Endothelial cell of umbilical vein (primary cell): ENCODE measurements at regions of chr16 and their contacts with region 1.

Region 1: GRCh38 chr16:56600398-56600999 is 7.9 kb upstream of the MT2A start:
- DNase-seq: peak; percentile 54
- H3K4me3 ChIP-seq: no peak overlapping the region
- H3K27ac ChIP-seq: no peak overlapping the region
- H3K4me1 ChIP-seq: peaks cover 6% of the 10 kb centered on the region
- H3K27me3 ChIP-seq: peaks cover 2 to 3% of the 10 kb centered on the region in 2 experiments
- CTCF ChIP-seq: peak; percentile 65 to 74
- POLR2A ChIP-seq: no peak

Region 2: DNA sequence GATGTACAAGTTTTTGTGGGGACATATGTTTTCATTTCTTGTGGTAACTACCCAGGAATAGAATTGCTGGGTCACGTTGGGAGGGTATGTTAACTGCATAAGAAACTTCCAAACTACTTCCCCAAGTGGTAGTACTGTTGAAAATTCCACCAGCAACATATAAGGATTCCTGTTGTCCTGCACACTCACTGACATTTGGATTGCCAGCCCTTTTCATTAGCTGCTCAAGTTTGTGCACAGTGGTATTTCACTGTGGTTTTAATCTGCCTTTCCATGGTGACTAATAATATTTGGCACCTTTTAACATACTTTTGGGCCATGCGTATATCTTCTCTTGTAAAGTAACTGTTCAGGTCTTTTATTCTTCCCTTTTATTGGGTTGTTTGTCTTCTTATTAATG is 305.9 kb before region 1 on chr16:
- CTCF ChIA-PET with region 1: no interaction called
- POLR2A ChIA-PET with region 1: no interaction called
- dilution Hi-C with region 1: no loop called
- intact Hi-C with region 1: no loop called
- DNase-seq: no peak
- H3K4me3 ChIP-seq: no peak overlapping the region
- H3K27ac ChIP-seq: no peak overlapping the region
- H3K4me1 ChIP-seq: no peaks in the 10 kb centered on the region
- H3K27me3 ChIP-seq: no peaks in the 10 kb centered on the region
- CTCF ChIP-seq: no peak
- POLR2A ChIP-seq: no peak

Region 3: GRCh38 chr16:56506941-56507340 is 93.6 kb before region 1 on chr16:
- CTCF ChIA-PET with region 1: interaction called, 13 read pairs
- POLR2A ChIA-PET with region 1: no interaction called
- dilution Hi-C with region 1: no loop called
- intact Hi-C with region 1: no loop called
- DNase-seq: peak; percentile 92
- H3K4me3 ChIP-seq: no peak overlapping the region
- H3K27ac ChIP-seq: peak overlapping the region; percentile 83
- H3K4me1 ChIP-seq: peaks cover 12% of the 10 kb centered on the region
- H3K27me3 ChIP-seq: no peaks in the 10 kb centered on the region
- CTCF ChIP-seq: no peak
- POLR2A ChIP-seq: no peak

Region 4: DNA sequence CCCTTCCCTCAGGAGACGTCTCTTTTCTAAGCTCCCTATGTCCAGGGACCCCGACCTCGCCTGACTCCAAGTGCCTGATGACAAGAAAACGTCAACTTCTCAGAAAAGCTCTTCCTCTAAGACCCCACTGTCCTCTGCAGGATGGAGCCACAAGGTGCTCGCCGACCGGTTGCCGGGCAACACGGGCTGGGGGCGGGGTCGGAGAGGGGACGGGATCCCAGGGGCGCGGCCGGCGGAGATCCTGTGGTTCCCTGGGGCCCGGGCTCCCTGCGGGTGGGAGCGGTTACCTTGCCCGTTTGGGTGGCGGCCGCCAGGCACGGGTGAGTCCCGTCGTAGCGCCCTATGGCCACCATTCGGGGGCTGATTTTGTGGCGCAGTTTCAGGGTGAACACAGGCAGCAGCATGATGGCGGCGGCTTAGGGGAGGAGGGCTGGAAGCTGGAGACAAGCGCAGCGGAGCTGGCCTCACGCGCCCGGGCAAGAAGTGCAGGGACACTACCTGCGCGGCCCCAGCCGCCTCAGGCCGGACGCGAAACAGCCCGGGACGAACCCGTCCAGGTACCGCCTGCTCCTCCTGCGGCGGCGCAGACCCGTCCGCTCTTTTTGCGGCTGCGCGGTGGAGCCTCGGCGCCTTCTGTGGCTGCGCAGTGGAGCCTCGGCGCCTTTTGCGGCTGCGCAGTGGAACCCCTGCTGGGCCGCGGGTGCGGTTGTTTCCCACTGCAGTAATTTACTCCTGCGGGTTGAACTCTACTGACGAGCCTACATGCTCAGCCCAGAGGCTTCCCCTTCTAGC is 80.8 kb before region 1 on chr16 and contains the start of gene BBS2:
- CTCF ChIA-PET with region 1: interaction called, 113 read pairs
- POLR2A ChIA-PET with region 1: no interaction called
- dilution Hi-C with region 1: no loop called
- intact Hi-C with region 1: loop called (anchors 1 kb)
- DNase-seq: peak; percentile 89
- H3K4me3 ChIP-seq: peak within 1 kb of the TSS; percentile 61 to 89 (median 76)
- H3K27ac ChIP-seq: peak within 1 kb of the TSS; percentile 13
- H3K4me1 ChIP-seq: peaks cover 13% of the 10 kb centered on the region
- H3K27me3 ChIP-seq: no peaks in the 10 kb centered on the region
- CTCF ChIP-seq: no peak
- POLR2A ChIP-seq: peak; percentile 89
- total RNA-seq, gene BBS2: 33.3 and 44.8 TPM in 2 replicates

Region 5: GRCh38 chr16:56576585-56577293 is 23.8 kb before region 1 on chr16:
- CTCF ChIA-PET with region 1: interaction called, 48 read pairs
- POLR2A ChIA-PET with region 1: no interaction called
- dilution Hi-C with region 1: no loop called
- intact Hi-C with region 1: loop called (anchors 1 kb)
- DNase-seq: peak; percentile 64
- H3K4me3 ChIP-seq: no peak overlapping the region
- H3K27ac ChIP-seq: no peak overlapping the region
- H3K4me1 ChIP-seq: no peaks in the 10 kb centered on the region
- H3K27me3 ChIP-seq: peaks cover 0 to 9% of the 10 kb centered on the region in 2 experiments
- CTCF ChIP-seq: peak; percentile 86 to 91
- POLR2A ChIP-seq: no peak

Region 6: GRCh38 chr16:56589141-56590039 is 11.1 kb before region 1 on chr16 and contains the start of gene MT3:
- CTCF ChIA-PET with region 1: interaction called, 26 read pairs
- POLR2A ChIA-PET with region 1: no interaction called
- dilution Hi-C with region 1: no loop called
- intact Hi-C with region 1: no loop called
- DNase-seq: no peak
- H3K4me3 ChIP-seq: peak within 1 kb of the TSS in 2 of 3 experiments; percentile 20 to 32
- H3K27ac ChIP-seq: no peak within 1 kb of the TSS
- H3K4me1 ChIP-seq: no peaks in the 10 kb centered on the region
- H3K27me3 ChIP-seq: peaks cover 20 to 21% of the 10 kb centered on the region in 2 experiments
- CTCF ChIP-seq: no peak
- POLR2A ChIP-seq: no peak
- total RNA-seq, gene MT3: not detected in 2 replicates

Region 7: DNA sequence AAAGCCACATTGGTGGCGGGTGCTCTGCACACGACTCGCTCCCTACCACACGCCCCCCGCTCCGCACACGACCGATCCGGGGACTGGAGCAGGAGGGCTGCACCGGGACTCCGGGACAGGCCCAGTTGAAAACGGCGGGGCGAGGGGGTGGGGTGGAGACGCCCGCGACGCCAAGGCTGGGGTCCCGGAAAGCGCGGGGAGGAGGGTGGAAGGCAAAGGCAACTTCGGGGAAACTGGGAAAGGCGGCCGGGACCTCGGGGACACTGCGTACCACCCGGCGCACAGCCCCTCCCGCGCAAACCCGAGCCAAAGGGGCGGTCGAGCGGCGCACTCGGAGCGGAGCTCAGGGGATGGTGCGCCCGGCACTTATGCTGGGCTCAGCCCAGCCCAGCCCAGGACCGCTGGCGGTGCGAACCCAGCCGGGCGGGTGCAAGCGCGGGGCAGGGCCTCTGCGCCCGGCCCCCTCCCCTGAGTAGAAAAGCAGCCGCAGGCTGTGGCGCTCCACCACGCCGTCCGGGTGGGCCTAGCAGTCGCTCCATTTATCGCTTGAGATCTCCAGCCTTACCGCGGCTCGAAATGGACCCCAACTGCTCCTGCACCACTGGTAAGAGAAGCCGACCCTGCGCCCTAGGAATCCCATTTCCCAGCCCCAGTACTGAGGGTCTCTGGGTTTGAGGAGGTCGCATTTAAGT is 31.8 kb after region 1 on chr16 and contains the start of gene MT1M:
- CTCF ChIA-PET with region 1: interaction called, 14 read pairs
- POLR2A ChIA-PET with region 1: no interaction called
- dilution Hi-C with region 1: no loop called
- intact Hi-C with region 1: no loop called
- DNase-seq: no peak
- H3K4me3 ChIP-seq: peak within 1 kb of the TSS; percentile 25 to 42 (median 31)
- H3K27ac ChIP-seq: no peak within 1 kb of the TSS
- H3K4me1 ChIP-seq: peaks cover 16% of the 10 kb centered on the region
- H3K27me3 ChIP-seq: peaks cover 28 to 32% of the 10 kb centered on the region in 2 experiments
- CTCF ChIP-seq: no peak
- POLR2A ChIP-seq: no peak
- total RNA-seq, gene MT1M: 1.8 and 4.6 TPM in 2 replicates

Region 8: GRCh38 chr16:56649820-56650219 is 49.3 kb after region 1 on chr16:
- CTCF ChIA-PET with region 1: no interaction called
- POLR2A ChIA-PET with region 1: no interaction called
- dilution Hi-C with region 1: no loop called
- intact Hi-C with region 1: no loop called
- DNase-seq: no peak
- H3K4me3 ChIP-seq: no peak overlapping the region
- H3K27ac ChIP-seq: no peak overlapping the region
- H3K4me1 ChIP-seq: no peaks in the 10 kb centered on the region
- H3K27me3 ChIP-seq: peaks cover 41 to 53% of the 10 kb centered on the region in 2 experiments
- CTCF ChIP-seq: no peak
- POLR2A ChIP-seq: no peak

Region 9: DNA sequence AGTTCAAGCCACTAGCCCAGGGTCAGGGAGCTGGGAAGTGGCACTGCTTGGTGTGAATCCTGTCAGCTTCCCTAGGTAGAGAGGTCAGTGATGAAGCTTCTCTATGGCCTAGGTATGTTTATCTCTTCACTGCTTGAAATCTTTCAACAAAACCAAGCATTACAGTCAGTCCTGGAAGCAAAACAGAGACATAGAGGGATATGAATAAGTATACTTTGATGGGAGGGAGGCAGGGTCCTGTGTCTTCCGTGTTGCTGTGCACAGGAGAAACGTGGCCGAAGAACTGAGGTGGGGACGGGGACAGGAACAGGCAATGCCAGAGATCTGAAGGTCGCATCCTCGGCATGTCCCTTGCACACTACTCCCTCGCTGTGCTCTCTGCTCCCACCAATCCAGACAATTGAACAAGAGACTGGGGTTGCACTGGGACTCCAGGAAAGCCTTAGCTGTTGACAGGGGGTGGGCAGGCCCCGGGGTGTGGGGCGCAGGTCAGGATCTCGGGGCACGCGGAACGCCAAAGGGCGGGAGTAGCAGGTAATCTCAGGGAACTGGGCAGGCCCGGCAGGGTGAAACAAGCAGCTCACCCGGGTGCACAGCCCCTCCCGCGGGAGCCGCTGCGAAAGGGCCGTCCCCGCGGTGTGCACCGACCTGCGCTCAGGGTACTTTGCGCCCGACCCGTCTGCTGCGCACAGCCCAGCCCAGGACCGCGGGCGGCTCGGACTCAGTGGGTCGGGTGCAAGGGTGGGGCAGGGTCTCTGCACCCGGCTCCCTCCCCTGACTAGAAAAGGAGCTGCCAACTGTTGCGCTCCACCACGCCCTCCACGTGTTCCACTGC is 68.7 kb after region 1 on chr16 and contains the start of gene MT1H:
- CTCF ChIA-PET with region 1: no interaction called
- POLR2A ChIA-PET with region 1: no interaction called
- dilution Hi-C with region 1: no loop called
- intact Hi-C with region 1: no loop called
- DNase-seq: no peak
- H3K4me3 ChIP-seq: no peak within 1 kb of the TSS
- H3K27ac ChIP-seq: no peak within 1 kb of the TSS
- H3K4me1 ChIP-seq: no peaks in the 10 kb centered on the region
- H3K27me3 ChIP-seq: peaks cover 76 to 91% of the 10 kb centered on the region in 2 experiments
- CTCF ChIP-seq: no peak
- POLR2A ChIP-seq: no peak
- total RNA-seq, gene MT1H: not detected in 2 replicates